ENCODE measurements at regions of chr1 and their contacts with region 1.

Region 1: GRCh38 chr1:201042779-201043461 is 19.4 kb upstream of the KIF21B start:
- DNase-seq: no peak
- ATAC-seq: peak; percentile 97
- H3K4me3 ChIP-seq: no peak overlapping the region
- H3K27ac ChIP-seq: no peak overlapping the region
- H3K4me1 ChIP-seq: no peaks in the 10 kb centered on the region
- H3K27me3 ChIP-seq: no peaks in the 10 kb centered on the region; a peak in 1 of 4 replicates
- CTCF ChIP-seq: peak; percentile 87 to 94 (median 93); a peak in 5 of 6 replicates
- EP300 ChIP-seq: no peak
- POLR2A ChIP-seq: no peak
- RAD21 ChIP-seq: peak; percentile 99

Region 2: GRCh38 chr1:200811704-200812103 is 231.2 kb before region 1 on chr1:
- CTCF ChIA-PET with region 1: interaction called, 5 read pairs
- POLR2A ChIA-PET with region 1: no interaction called
- RAD21 ChIA-PET with region 1: no interaction called
- SMC1A ChIA-PET with region 1: no interaction called
- in situ Hi-C with region 1: no loop called
- intact Hi-C with region 1: loop called (anchors 10 kb)
- DNase-seq: no peak
- ATAC-seq: no peak
- H3K4me3 ChIP-seq: no peak overlapping the region
- H3K27ac ChIP-seq: no peak overlapping the region
- H3K4me1 ChIP-seq: no peaks in the 10 kb centered on the region
- H3K27me3 ChIP-seq: no peaks in the 10 kb centered on the region
- CTCF ChIP-seq: no peak
- EP300 ChIP-seq: no peak
- POLR2A ChIP-seq: no peak
- RAD21 ChIP-seq: no peak

Measured in GM12878 (cell line).